Naive thymus-derived CD4-positive, alpha-beta T cell (primary cell): ENCODE measurements at regions of chr1 and their contacts with region 1.

Region 1: DNA sequence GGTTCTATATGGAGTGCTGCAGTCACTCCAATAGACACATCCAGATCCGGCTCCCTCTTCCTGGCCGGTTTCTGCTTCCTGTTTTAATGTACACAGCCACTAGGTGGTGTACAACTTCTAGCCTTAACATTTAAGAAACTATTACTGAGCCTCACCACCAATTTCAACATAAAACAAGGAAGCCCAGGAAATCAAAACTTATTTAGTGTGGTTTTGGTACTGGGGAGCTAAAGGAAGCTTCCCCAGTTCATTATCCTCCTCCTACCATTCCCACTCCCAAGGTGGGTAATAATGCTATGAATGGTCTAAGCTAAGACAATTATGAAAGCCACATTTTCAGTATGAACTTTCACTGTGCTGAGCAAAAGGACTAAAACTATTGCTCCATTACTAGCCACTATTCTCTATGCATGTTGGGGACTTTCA is 25.5 kb upstream of the MTMR11 start:
- DNase-seq: peak in 7 of 9 donors; percentile 39 to 62 (median 57)
- ATAC-seq: peak; percentile 88
- H3K4me3 ChIP-seq: no peak overlapping the region
- H3K4me3 Mint-ChIP-seq: no peak overlapping the region
- H3K27ac ChIP-seq: no peak overlapping the region
- H3K27ac Mint-ChIP-seq: peak overlapping the region in 3 of 9 donors; percentile 45 to 71 (median 64)
- H3K4me1 ChIP-seq: no peaks in the 10 kb centered on the region
- H3K4me1 Mint-ChIP-seq: peaks cover 6 to 24% (median 19%) of the 10 kb centered on the region in 7 donors
- H3K27me3 ChIP-seq: no peaks in the 10 kb centered on the region
- H3K27me3 Mint-ChIP-seq: no peaks in the 10 kb centered on the region

Region 2: GRCh38 chr1:150010393-150011115 is 48.4 kb after region 1 on chr1 and contains the start of gene OTUD7B:
- CTCF ChIA-PET with region 1: interaction called, 3 read pairs
- POLR2A ChIA-PET with region 1: interaction called, 7 read pairs
- intact Hi-C with region 1: loop called in 1 of 2 experiments (anchors 5 kb)
- DNase-seq: peak; percentile 5 to 85 (median 46)
- ATAC-seq: peak; percentile 92
- H3K4me3 ChIP-seq: peak within 1 kb of the TSS; percentile 89
- H3K4me3 Mint-ChIP-seq: peak within 1 kb of the TSS; percentile 88 to 99 (median 96)
- H3K27ac ChIP-seq: peak within 1 kb of the TSS; percentile 73
- H3K27ac Mint-ChIP-seq: peak within 1 kb of the TSS; percentile 85 to 93 (median 87)
- H3K4me1 ChIP-seq: peaks cover 8 to 12% of the 10 kb centered on the region in 2 donors
- H3K4me1 Mint-ChIP-seq: peaks cover 21 to 38% (median 31%) of the 10 kb centered on the region in 7 donors
- H3K27me3 ChIP-seq: no peaks in the 10 kb centered on the region
- H3K27me3 Mint-ChIP-seq: peaks cover 0 to 12% (median 0%) of the 10 kb centered on the region in 5 donors
- total RNA-seq, gene OTUD7B: 4.6 to 12.8 (median 9.7) TPM

Region 3: GRCh38 chr1:150162862-150163706 is 200.9 kb after region 1 on chr1:
- CTCF ChIA-PET with region 1: interaction called, 5 read pairs
- POLR2A ChIA-PET with region 1: no interaction called
- intact Hi-C with region 1: loop called in 1 of 2 experiments (anchors 1 kb)
- DNase-seq: no peak
- ATAC-seq: peak; percentile 76
- H3K4me3 ChIP-seq: no peak overlapping the region
- H3K4me3 Mint-ChIP-seq: peak overlapping the region; percentile 12 to 72 (median 55)
- H3K27ac ChIP-seq: no peak overlapping the region
- H3K27ac Mint-ChIP-seq: peak overlapping the region in 8 of 9 donors; percentile 14 to 85 (median 58)
- H3K4me1 ChIP-seq: peaks cover 0 to 31% of the 10 kb centered on the region in 2 donors
- H3K4me1 Mint-ChIP-seq: peaks cover 39 to 73% (median 51%) of the 10 kb centered on the region in 7 donors
- H3K27me3 ChIP-seq: no peaks in the 10 kb centered on the region
- H3K27me3 Mint-ChIP-seq: peaks cover 0 to 9% (median 0%) of the 10 kb centered on the region in 5 donors

Region 4: GRCh38 chr1:150186789-150187559 is 224.8 kb after region 1 on chr1:
- CTCF ChIA-PET with region 1: interaction called, 14 read pairs
- POLR2A ChIA-PET with region 1: interaction called, 4 read pairs
- intact Hi-C with region 1: loop called (anchors 1 kb)
- DNase-seq: peak in 7 of 9 donors; percentile 28 to 77 (median 68)
- ATAC-seq: peak; percentile 87
- H3K4me3 ChIP-seq: no peak overlapping the region
- H3K4me3 Mint-ChIP-seq: peak overlapping the region in 7 of 10 donors; percentile 6 to 74 (median 35)
- H3K27ac ChIP-seq: no peak overlapping the region
- H3K27ac Mint-ChIP-seq: peak overlapping the region in 7 of 9 donors; percentile 9 to 70 (median 33)
- H3K4me1 ChIP-seq: peaks cover 0 to 4% of the 10 kb centered on the region in 2 donors
- H3K4me1 Mint-ChIP-seq: peaks cover 7 to 13% (median 10%) of the 10 kb centered on the region in 7 donors
- H3K27me3 ChIP-seq: no peaks in the 10 kb centered on the region
- H3K27me3 Mint-ChIP-seq: no peaks in the 10 kb centered on the region

Region 5: DNA sequence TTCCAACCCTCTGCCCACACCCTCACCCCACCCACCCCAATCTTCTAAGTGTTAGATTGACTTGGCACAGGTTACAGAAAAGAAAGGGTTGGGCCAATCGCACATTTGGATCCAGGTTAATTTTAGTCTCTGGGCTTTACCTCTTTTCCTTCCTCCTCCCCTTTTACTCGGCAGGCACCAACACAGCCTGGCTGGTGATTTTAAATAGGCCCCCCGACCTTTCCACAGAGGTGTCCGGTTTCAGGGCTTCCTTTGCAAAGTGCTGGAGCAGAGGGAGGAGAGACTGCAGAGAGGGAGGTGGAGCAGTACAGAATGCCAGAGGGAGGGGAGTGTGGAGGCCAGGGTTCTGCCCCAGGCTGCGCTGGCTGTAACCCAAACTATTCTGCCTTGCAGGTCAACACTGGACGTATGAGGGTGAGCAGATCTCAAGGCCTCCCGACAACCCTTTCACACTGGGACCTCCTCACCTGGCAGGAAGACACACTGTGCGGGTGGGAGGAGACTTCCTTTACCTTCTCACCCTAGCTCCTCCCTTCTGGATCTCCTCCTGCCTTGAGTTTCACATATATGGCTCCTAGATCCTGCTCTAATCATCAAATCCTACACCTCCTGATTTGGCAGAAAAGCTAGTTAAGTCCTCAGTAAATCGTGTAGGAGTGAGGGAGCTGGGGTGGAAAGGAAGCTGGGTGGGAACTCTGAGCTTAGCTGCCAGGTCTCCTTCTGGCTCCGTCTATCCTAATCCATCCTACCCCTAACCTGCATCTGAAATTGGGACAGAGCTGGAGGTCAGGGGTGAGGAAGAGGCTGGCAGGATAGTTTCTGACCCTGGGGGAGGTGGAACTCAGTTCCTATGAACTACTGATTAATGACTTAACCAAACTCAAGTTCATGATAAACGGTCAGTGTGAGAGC is 297.9 kb after region 1 on chr1:
- CTCF ChIA-PET with region 1: no interaction called
- POLR2A ChIA-PET with region 1: no interaction called
- intact Hi-C with region 1: no loop called
- DNase-seq: no peak
- ATAC-seq: no peak
- H3K4me3 ChIP-seq: no peak overlapping the region
- H3K4me3 Mint-ChIP-seq: peak overlapping the region in 1 of 10 donors; percentile 32
- H3K27ac ChIP-seq: no peak overlapping the region
- H3K27ac Mint-ChIP-seq: no peak overlapping the region
- H3K4me1 ChIP-seq: peaks cover 6 to 8% of the 10 kb centered on the region in 2 donors
- H3K4me1 Mint-ChIP-seq: peaks cover 6 to 23% (median 15%) of the 10 kb centered on the region in 7 donors
- H3K27me3 ChIP-seq: peaks cover 0 to 10% of the 10 kb centered on the region in 2 donors
- H3K27me3 Mint-ChIP-seq: peaks cover 13 to 49% (median 26%) of the 10 kb centered on the region in 5 donors